ENCODE measurements at regions of chr14 and their contacts with region 1.

Region 1: DNA sequence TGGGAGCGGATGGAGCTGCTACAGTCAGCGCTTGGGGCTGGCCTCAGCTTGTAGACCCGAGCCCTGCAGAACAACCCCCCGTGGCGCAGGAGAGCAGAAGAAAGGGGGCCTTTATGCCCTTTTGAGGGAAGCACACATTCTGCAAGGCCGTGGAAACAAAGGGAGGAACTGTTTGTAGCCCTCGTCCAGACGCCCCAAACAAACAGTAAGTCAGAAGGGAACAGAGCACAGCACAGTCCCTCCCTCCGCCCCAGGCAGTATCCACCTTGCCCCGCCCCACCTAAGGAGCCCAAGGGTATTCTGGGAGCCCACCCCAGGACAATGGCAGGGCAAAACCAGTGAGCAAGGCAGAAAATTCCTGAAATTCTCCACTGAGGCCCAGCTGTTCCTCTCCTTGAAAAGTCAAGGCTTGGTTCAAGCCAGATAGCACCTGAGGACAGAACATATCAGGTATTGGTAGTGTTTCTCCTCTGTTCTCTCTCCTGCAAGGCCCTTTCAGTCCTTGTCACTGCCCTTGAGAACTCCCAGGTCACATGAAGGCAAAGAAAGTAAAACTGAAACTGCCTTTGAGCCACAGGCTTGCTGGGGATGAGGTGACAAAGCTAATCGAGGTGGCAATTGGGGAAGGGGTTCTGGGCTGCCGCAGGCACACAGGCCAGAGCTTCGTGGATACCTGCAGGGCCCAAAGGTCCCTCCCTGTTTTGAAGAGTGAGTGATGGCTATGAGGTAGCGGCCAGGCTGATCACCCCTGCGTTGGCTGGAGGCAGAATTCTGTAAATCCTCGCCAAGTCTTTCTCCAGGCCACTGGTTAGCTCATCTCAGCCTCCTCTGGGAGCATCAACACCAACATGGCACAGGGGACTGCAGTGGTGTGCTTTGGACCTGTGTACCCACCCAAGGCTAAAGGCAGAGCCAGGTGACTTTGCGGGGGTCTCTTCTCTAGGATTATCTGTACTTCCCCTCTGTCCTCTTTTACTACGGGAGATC is 499 bp downstream of the DGLUCY start:
- DNase-seq: peak in 1 of 2 experiments; percentile 38
- ATAC-seq: peak; percentile 78 to 85
- H3K4me3 ChIP-seq: peak overlapping the region; percentile 45
- H3K27ac ChIP-seq: peak overlapping the region; percentile 83 to 90
- H3K4me1 ChIP-seq: peaks cover 27% of the 10 kb centered on the region
- CTCF ChIP-seq: no peak
- EP300 ChIP-seq: no peak
- POLR2A ChIP-seq: peak; percentile 47
- RAD21 ChIP-seq: no peak

Region 2: DNA sequence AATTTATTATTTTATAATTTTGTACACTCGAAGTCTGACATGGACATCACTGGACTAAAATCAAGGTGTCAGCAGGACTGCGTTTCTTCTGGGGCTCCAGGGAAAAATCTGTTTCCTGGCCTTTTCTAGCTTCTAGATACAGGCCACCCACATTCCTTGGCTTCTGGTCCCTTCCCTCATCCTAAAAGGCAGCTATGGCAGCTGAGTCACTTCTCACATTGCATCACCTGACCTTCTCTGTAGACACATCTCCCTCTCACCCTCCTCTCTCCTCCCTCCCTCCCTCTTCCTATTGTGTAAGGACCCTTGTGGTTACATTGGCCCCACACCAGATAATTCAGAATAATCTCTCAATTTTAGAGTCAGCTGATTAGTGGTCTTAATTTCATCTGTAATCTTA is 146.3 kb before region 1 on chr14:
- CTCF ChIA-PET with region 1: no interaction called
- POLR2A ChIA-PET with region 1: no interaction called
- DNase-seq: peak in 1 of 2 experiments; percentile 10
- ATAC-seq: no peak
- H3K4me3 ChIP-seq: no peak overlapping the region
- H3K27ac ChIP-seq: peak overlapping the region in 1 of 2 experiments; percentile 24; a peak in 1 of 6 replicates
- H3K4me1 ChIP-seq: peaks cover 20% of the 10 kb centered on the region; the same call in 2 of the 3 replicates
- CTCF ChIP-seq: no peak
- EP300 ChIP-seq: no peak
- POLR2A ChIP-seq: no peak
- RAD21 ChIP-seq: no peak

Region 3: GRCh38 chr14:91060351-91061055 is 53.9 kb before region 1 on chr14 and contains the start of gene RPS6KA5:
- CTCF ChIA-PET with region 1: no interaction called
- POLR2A ChIA-PET with region 1: interaction called, 13 read pairs
- DNase-seq: peak; percentile 97 to 100
- ATAC-seq: peak; percentile 93 to 96
- H3K4me3 ChIP-seq: peak within 1 kb of the TSS; percentile 67
- H3K27ac ChIP-seq: peak within 1 kb of the TSS; percentile 73 to 91
- H3K4me1 ChIP-seq: peaks cover 22% of the 10 kb centered on the region
- CTCF ChIP-seq: no peak; the same call in 2 of the 3 replicates
- EP300 ChIP-seq: no peak
- POLR2A ChIP-seq: peak; percentile 25; the same call in 1 of the 2 replicates
- RAD21 ChIP-seq: 0 out of 5 replicates have a peak, but pooled peaks of 1 of the 2 experiments have one; percentile 28
- polyA plus RNA-seq, gene RPS6KA5: 3.6 and 4.1 TPM in 2 replicates

Region 4: GRCh38 chr14:91089958-91090535 is 24.3 kb before region 1 on chr14:
- CTCF ChIA-PET with region 1: no interaction called
- POLR2A ChIA-PET with region 1: interaction called, 11 read pairs
- DNase-seq: no peak
- ATAC-seq: no peak
- H3K4me3 ChIP-seq: no peak overlapping the region
- H3K27ac ChIP-seq: no peak overlapping the region
- H3K4me1 ChIP-seq: no peaks in the 10 kb centered on the region
- CTCF ChIP-seq: no peak
- EP300 ChIP-seq: no peak
- POLR2A ChIP-seq: no peak
- RAD21 ChIP-seq: no peak

Region 5: DNA sequence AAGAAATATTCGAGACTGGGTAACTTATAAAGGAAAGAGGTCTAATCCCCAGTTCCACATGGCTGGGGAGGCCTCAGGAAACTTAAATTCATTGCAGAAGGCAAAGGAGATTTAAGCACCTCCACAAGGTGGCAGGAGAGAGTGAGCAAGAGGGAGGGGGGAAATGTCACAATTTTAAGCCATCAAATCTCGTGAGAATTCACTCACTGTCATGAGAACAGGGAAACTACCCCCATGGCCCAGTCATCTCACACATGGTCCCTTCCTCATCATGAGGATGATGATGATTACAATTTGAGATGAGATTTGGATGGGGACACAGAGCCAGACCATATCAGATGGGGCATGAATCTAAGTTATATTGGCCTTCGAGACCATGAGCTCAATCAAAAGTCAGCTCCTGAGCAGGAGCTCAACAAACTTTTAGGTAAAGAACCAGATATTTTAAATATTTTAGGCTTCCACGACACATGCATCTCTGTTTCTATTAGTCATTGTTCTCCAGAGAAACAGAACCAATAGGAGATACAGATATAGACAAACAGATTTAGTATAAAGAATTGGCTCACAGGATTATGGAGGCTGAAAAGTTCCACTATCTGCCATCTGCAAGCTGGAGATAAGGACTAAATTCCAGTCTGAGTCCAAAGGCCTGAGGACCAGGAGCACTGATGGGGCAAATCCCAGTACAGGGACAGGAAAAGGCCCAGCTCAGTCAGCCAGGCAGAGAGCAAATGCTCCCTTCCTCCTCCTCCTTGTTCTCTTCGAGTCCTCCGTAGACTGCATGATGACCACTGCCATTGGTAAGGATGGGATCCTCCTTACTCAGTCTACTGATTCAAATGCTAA is 24.4 kb after region 1 on chr14:
- CTCF ChIA-PET with region 1: no interaction called
- POLR2A ChIA-PET with region 1: no interaction called
- DNase-seq: peak; percentile 28 to 62
- ATAC-seq: peak; percentile 54 to 70; a peak in 3 of 6 replicates
- H3K4me3 ChIP-seq: no peak overlapping the region
- H3K27ac ChIP-seq: no peak overlapping the region
- H3K4me1 ChIP-seq: 0 out of 3 replicates have a peak, but pooled peaks cover 5% of the 10 kb centered on the region
- CTCF ChIP-seq: peak; percentile 41
- EP300 ChIP-seq: no peak
- POLR2A ChIP-seq: no peak
- RAD21 ChIP-seq: peak; percentile 26 to 37; a peak in 2 of 5 replicates

Region 6: DNA sequence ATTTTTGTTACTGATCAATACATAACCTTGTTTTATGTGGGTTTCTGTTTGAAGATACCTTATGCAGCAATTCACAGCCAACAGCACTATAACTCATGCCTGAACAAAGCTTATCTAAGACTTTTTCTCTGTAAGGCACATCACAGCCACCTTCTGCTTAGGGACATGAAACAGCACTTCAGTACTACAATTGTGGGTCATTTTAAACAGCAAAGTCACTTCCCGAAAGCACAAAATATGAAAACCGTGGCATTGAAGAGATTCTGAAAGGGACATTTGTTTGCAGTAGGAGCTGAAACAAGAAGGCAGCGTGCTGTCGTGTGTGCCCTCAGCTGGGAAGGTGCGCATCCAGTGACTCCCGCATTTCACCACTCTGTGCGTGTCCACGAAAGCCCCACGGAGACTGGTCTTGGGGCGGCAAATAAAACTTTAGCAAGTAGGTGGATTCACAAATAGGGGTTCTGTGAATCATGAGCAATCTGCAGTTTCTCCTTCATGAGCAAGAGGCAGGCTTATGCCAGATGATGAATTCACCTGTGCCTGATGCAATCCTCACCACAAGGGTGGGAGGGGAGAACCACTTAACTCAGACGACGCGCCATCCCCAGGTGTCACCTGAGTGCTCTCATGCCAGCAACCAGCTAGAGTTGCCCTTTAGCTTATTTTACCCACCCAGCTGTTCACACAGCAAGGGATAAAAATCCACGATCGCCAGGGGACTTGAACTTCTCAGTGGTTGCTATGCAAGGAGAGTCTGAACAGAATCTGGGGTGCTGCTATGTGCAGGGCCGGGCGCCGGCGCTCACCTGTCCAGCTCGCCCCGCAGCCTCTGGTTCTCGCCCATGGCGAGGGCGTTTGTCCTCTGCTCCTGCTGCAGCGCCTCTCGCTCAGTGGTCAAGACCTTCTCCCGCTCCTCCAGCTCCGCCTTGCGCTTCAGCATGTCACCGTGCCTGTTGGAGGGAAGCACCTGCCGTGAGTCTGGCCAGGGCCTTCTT is 185.0 kb after region 1 on chr14:
- CTCF ChIA-PET with region 1: no interaction called
- POLR2A ChIA-PET with region 1: no interaction called
- DNase-seq: no peak
- ATAC-seq: no peak
- H3K4me3 ChIP-seq: no peak overlapping the region
- H3K27ac ChIP-seq: no peak overlapping the region
- H3K4me1 ChIP-seq: no peaks in the 10 kb centered on the region
- CTCF ChIP-seq: no peak
- EP300 ChIP-seq: no peak
- POLR2A ChIP-seq: no peak
- RAD21 ChIP-seq: no peak